ENCODE measurements at regions of chr11 and their contacts with region 1.

Region 1: DNA sequence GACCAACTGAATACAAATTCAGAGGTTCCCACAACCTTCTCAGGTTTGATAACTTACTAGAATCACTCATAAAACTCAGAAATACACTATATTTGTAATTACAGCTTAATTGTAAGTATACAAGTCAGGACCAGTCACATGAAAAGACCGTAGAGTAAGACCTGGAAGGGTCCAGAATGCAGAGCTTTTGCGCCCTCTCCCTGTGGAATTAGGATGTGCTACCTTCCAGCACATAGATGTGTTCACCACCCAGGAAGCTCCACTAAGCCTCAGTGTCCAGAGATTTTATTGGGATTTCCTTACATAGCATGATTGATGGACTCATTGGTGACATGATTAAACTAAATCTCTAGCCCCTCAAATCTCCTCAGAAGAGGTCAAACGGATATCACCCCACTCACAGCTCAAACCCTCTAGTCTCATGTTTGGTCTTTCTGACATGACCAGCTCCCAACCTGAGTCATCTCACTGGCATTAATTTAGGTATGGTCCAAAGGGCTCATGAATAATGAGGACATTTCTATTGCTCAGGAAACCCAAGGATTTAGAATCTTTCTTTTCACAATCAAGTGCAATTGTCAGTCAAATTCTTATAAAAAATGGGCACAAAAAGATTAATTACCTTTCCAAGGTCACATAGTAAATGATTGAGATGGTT is 77.2 kb upstream of the UBASH3B start:
- DNase-seq: peak; percentile 11
- H3K4me3 Mint-ChIP-seq: no peak overlapping the region
- H3K27ac Mint-ChIP-seq: no peak overlapping the region
- H3K4me1 Mint-ChIP-seq: peaks cover 15% of the 10 kb centered on the region
- H3K27me3 Mint-ChIP-seq: no peaks in the 10 kb centered on the region
- CTCF ChIP-seq: no peak

Region 2: DNA sequence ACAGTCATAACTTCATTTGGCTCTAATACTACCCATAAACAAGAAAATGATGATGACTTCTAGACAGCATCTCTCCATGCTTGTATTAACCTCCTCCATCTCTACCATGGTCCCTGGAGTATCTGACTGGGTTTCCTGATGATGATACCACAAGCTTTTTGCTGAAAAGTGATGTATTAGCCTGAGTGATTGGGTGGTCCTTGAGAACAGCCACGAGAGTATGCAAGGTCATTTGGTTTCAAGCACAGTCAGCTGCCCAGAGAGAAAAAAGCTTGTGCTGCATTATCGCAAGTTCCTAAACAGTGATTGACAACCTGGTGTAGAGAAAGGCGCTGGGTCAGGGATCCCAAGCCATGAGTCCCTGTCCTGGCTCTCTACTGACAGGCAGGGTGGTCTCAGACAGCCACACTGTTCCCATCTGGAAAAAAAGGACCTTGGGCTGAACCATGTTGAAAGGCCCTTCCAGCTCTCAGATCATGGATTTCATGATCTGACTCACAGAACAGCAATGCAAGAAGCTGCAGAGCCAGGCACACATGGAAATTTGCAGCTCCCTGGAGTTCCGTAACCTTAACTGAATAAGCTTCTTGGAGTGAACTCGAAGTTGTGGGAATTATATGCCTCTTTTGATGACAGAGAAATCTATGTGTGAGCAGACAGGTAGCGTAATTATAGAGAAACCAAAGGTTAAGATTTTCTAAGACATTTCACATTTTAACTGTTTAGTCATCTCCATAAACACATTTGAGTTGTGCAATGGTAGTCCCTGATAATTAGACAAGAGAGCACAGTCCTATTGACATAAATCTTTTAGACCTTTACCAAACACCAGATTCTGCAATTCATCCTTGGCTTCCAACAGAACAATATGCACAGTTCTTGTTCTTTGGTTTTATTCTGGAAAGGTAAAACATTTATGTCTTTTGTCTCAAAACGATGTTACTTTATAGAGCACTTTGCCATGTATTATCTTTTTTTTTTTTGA is 23.1 kb after region 1 on chr11:
- CTCF ChIA-PET with region 1: interaction called, 18 read pairs
- POLR2A ChIA-PET with region 1: no interaction called
- intact Hi-C with region 1: no loop called
- DNase-seq: peak; percentile 45
- H3K4me3 Mint-ChIP-seq: no peak overlapping the region
- H3K27ac Mint-ChIP-seq: no peak overlapping the region
- H3K4me1 Mint-ChIP-seq: peaks cover 5% of the 10 kb centered on the region
- H3K27me3 Mint-ChIP-seq: no peaks in the 10 kb centered on the region
- CTCF ChIP-seq: no peak

Region 3: DNA sequence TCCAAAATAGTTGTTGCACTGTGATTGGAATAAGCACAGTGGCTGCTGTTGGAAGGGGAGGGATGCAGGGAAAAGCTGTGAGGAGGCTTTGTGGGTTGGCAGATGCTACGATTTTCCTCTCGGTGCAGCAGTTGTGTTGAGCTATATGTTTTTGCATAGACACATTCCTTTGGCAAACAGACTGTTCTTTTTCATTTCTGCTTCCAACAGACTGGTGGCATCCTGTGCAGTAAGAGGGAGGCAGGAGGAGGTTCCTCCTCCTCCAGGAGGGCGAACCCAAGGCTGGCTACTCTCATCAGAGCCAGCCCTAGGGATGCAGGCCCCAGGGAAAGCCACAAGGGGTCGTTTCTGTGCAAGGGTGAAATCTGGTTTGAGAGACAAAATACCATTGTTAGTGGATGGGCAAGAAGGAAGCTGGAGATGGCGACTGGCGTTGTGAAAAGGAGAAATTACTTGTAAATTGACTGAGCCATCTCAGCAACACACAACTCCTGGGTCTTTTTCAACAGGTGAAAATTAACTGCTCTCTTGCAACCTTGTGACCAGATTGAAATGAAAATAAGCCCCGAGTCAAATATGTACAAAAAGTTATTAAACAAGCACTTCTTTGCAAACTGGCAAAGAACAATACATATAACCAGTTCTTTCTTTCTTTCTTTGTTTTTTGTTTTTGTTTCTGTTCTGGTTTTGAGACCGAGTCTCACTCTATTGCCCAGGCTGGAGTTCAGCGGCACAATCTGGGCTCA is 50.7 kb after region 1 on chr11:
- CTCF ChIA-PET with region 1: interaction called, 8 read pairs
- POLR2A ChIA-PET with region 1: no interaction called
- intact Hi-C with region 1: loop called (anchors 1 kb)
- DNase-seq: peak; percentile 82
- H3K4me3 Mint-ChIP-seq: no peak overlapping the region
- H3K27ac Mint-ChIP-seq: no peak overlapping the region
- H3K4me1 Mint-ChIP-seq: peaks cover 18% of the 10 kb centered on the region
- H3K27me3 Mint-ChIP-seq: no peaks in the 10 kb centered on the region
- CTCF ChIP-seq: peak; percentile 83